Uterus (tissue), 4 donors: ENCODE measurements at regions of chr3 and their contacts with region 1.

Region 1: GRCh38 chr3:98022978-98023820 is 11.9 kb downstream of the GABRR3 start:
- DNase-seq: peak; percentile 87 to 89
- H3K4me3 ChIP-seq: no peak overlapping the region
- H3K27ac ChIP-seq: no peak overlapping the region
- H3K4me1 ChIP-seq: no peaks in the 10 kb centered on the region
- H3K27me3 ChIP-seq: no peaks in the 10 kb centered on the region
- CTCF ChIP-seq: peak; percentile 83 to 96 (median 90)
- POLR2A ChIP-seq: no peak

Region 2: DNA sequence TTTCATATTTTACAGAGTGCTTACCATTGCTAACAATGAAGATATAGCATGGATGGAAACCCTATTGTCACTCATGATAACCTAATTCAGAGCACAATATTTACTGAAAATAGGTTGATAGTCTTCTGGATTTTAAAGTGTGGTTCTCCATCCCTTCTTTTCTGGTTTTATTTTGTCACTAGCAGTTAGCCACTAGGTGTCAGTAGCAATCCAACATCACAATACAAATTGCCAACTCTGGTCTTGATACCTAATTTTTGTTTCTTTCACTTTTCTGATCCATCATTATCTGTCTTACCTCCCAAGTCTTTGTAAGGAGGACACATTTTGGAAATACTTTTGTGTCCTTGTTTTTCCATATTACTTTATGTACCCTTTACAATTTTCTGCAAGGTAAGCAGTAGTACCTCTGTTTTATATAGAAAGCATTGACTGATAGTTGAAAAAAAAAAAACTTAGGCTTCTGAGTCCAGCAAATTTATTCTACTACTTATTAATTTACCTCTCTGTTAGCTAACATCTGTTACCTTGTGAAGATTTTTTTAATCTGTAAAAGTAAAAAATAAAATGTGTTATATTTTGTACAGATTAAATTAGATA is 229.7 kb before region 1 on chr3:
- intact Hi-C with region 1: loop called (anchors 2 kb)
- DNase-seq: no peak
- H3K4me3 ChIP-seq: no peak overlapping the region
- H3K27ac ChIP-seq: no peak overlapping the region
- H3K4me1 ChIP-seq: no peaks in the 10 kb centered on the region
- H3K27me3 ChIP-seq: no peaks in the 10 kb centered on the region
- CTCF ChIP-seq: peak; percentile 74 to 82 (median 78)
- POLR2A ChIP-seq: no peak